BJ (cell line): ENCODE measurements at regions of chr16 and their contacts with region 1.

Region 1: GRCh38 chr16:66830422-66831404 is at the start of gene NAE1:
- DNase-seq: peak; percentile 32
- H3K4me3 ChIP-seq: peak within 1 kb of the TSS; percentile 73
- H3K27me3 ChIP-seq: no peaks in the 10 kb centered on the region
- CTCF ChIP-seq: peak; percentile 86
- polyA plus RNA-seq, gene NAE1: 27.3 and 43.6 TPM in 2 replicates

Region 2: GRCh38 chr16:66774981-66775380 is 55.7 kb before region 1 on chr16:
- CTCF ChIA-PET with region 1: no interaction called
- POLR2A ChIA-PET with region 1: no interaction called
- DNase-seq: no peak
- H3K4me3 ChIP-seq: no peak overlapping the region
- H3K27me3 ChIP-seq: no peaks in the 10 kb centered on the region
- CTCF ChIP-seq: no peak

Region 3: GRCh38 chr16:66801320-66802105 is 29.2 kb before region 1 on chr16 and contains the start of gene TERB1:
- CTCF ChIA-PET with region 1: interaction called, 11 read pairs
- POLR2A ChIA-PET with region 1: no interaction called
- DNase-seq: no peak
- H3K4me3 ChIP-seq: no peak within 1 kb of the TSS
- H3K27me3 ChIP-seq: no peaks in the 10 kb centered on the region
- CTCF ChIP-seq: no peak
- polyA plus RNA-seq, gene TERB1: 0.07 TPM in 1 of 2 replicates, not detected in the other

Region 4: GRCh38 chr16:66811043-66811442 is 19.7 kb before region 1 on chr16:
- CTCF ChIA-PET with region 1: interaction called, 11 read pairs
- POLR2A ChIA-PET with region 1: no interaction called
- DNase-seq: no peak
- H3K4me3 ChIP-seq: no peak overlapping the region
- H3K27me3 ChIP-seq: no peaks in the 10 kb centered on the region
- CTCF ChIP-seq: no peak

Region 5: GRCh38 chr16:66844342-66845079 is 13.8 kb after region 1 on chr16 and contains the start of gene CA7:
- CTCF ChIA-PET with region 1: interaction called, 19 read pairs
- POLR2A ChIA-PET with region 1: no interaction called
- DNase-seq: no peak
- H3K4me3 ChIP-seq: peak within 1 kb of the TSS; percentile 30
- H3K27me3 ChIP-seq: peaks cover 44% of the 10 kb centered on the region
- CTCF ChIP-seq: no peak
- polyA plus RNA-seq, gene CA7: not detected in 2 replicates

Region 6: DNA sequence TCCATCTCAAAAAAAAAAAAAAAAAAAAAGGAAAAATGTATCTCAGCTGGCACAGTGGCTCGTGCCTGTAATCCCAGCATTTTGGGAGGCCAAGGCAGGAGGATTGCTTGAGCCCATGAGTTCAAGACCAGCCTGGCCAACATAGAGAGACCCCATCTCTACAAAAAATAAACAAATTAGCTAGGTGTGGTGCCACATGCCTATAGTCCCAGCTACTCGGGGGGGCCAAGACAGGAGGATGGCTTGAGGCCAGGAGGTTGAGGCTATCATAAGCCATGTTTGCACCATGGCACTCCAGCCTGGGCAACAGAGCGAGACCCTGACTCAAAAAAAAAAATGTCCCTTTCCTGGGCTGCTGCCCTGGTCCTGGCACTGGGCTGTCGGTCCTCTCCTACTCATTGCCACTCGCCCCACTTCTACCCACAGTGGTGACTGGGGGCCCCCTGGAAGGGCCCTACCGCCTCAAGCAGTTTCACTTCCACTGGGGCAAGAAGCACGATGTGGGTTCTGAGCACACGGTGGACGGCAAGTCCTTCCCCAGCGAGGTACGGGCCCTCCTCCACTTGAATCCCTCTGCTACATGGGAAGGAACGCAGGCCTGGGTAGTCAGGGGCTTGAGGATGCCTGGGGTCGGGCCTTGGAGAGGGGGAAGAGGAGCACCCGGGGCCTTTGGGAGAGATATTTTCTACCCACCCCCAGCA is 19.6 kb after region 1 on chr16:
- CTCF ChIA-PET with region 1: interaction called, 21 read pairs
- POLR2A ChIA-PET with region 1: no interaction called
- DNase-seq: no peak
- H3K4me3 ChIP-seq: no peak overlapping the region
- H3K27me3 ChIP-seq: peaks cover 23% of the 10 kb centered on the region
- CTCF ChIP-seq: no peak

Region 7: GRCh38 chr16:66858740-66859396 is 28.2 kb after region 1 on chr16:
- CTCF ChIA-PET with region 1: interaction called, 21 read pairs
- POLR2A ChIA-PET with region 1: no interaction called
- DNase-seq: peak; percentile 24
- H3K4me3 ChIP-seq: no peak overlapping the region
- H3K27me3 ChIP-seq: no peaks in the 10 kb centered on the region
- CTCF ChIP-seq: no peak

Region 8: DNA sequence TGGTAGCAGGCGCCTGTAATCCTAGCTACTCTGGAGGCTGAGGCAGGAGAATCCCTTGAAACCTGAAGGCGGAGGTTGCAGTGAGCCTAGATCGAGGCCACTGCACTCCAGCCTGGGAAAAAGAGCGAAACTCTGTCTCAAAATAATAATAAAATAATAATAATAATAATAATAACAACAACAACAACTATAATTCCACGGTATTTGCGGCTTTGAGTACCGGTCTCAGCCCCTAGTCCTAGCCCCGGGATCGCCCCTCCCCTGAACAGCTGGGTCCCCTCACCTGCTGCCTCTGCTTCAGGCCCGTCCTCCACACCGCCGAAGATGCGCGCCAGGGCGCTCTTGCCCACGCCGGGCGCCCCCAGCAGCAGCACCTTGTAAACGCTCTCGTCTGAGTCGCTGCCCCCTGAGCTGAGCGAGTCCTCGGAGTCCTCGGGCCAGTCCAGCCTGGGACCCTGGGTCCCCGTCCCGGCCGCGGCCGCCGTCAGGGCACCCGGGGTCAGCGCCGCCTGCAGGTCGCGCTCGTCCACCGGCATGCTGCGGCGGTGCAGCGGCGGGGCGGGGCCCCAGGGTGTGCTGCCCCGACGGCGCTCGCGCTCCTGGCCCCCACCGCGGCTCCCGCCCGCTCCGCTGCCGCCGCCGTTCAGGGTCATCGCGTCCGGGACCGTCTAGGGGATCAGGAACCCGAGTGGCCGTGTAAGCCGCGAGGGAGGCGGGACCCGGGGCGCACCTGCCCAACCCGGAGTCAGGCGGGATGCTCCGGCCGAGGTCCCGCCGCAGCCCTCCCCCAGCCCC is 94.0 kb after region 1 on chr16:
- CTCF ChIA-PET with region 1: no interaction called
- POLR2A ChIA-PET with region 1: no interaction called
- DNase-seq: no peak
- H3K4me3 ChIP-seq: peak overlapping the region; percentile 45
- H3K27me3 ChIP-seq: peaks cover 9% of the 10 kb centered on the region
- CTCF ChIP-seq: no peak